ENCODE measurements at regions of chr18 and their contacts with region 1.

Region 1: DNA sequence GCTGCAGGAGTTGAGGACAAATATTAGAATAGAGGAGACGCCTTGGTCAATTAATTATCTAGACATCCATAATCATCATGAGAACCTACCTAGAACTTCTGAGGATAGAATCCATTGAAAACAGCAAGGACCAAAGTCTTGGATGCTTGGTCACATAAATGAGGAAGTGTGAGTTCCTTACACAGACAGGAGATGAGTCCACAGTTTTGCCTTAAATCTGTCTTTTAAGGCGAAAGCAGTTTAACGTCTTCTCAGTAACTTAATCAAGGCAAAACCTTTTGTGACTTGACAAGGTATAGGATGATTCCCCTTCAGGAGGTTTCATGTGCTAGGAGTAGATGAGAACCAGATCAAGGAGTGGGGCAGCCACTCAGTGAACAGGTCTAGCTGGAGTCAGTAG is 1783.2 kb upstream of the CELF4 start:
- DNase-seq: no peak
- H3K4me3 ChIP-seq: no peak overlapping the region
- H3K27ac ChIP-seq: no peak overlapping the region
- H3K4me1 ChIP-seq: no peaks in the 10 kb centered on the region
- H3K27me3 ChIP-seq: no peaks in the 10 kb centered on the region
- CTCF ChIP-seq: no peak

Region 2: GRCh38 chr18:39329496-39330275 is 19.1 kb before region 1 on chr18:
- CTCF ChIA-PET with region 1: no interaction called
- POLR2A ChIA-PET with region 1: interaction called, 21 read pairs
- intact Hi-C with region 1: no loop called
- DNase-seq: no peak
- H3K4me3 ChIP-seq: no peak overlapping the region
- H3K27ac ChIP-seq: no peak overlapping the region
- H3K4me1 ChIP-seq: no peaks in the 10 kb centered on the region
- H3K27me3 ChIP-seq: no peaks in the 10 kb centered on the region
- CTCF ChIP-seq: no peak

Measured in PC-9 (cell line).